Activated CD4-positive, alpha-beta T cell treated with anti-CD3 and anti-CD28 coated beads, Interleukin-2, amount 10 ng/mL, durations not matched to agents 24 days and 14 days (primary cell): ENCODE measurements at regions of chr6 and their contacts with region 1.

Region 1: GRCh38 chr6:108260809-108261569 is at the start of gene SNX3:
- DNase-seq: peak; percentile 97
- H3K4me3 Mint-ChIP-seq: peak within 1 kb of the TSS; percentile 86
- H3K27ac Mint-ChIP-seq: peak within 1 kb of the TSS; percentile 89
- H3K4me1 Mint-ChIP-seq: peaks cover 18% of the 10 kb centered on the region
- H3K27me3 Mint-ChIP-seq: peaks cover 9% of the 10 kb centered on the region
- total RNA-seq, gene SNX3: 75.1 and 78.0 TPM in 2 replicates

Region 2: DNA sequence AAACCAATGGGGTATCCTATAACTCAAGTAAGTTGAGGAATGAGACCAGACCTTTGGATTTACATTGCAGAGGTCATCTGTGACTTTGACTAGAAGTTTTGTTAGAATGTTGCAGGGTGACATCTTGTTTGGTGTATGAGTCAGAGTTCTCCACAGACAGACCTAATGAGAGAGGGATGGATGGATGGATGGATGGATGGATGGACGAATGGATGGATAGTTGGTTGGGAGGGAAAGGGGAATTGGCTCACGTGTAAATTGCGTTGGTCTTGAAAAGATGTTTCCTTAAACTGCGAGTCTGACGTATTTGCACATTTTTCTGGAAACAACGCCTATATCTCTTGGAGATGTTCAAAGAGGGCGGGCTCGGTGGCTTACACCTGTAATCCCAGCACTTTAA is 1234.0 kb before region 1 on chr6:
- intact Hi-C with region 1: loop called (anchors 5 kb)
- DNase-seq: no peak
- H3K4me3 Mint-ChIP-seq: no peak overlapping the region
- H3K27ac Mint-ChIP-seq: no peak overlapping the region
- H3K4me1 Mint-ChIP-seq: peaks cover 19% of the 10 kb centered on the region
- H3K27me3 Mint-ChIP-seq: no peaks in the 10 kb centered on the region

Region 3: DNA sequence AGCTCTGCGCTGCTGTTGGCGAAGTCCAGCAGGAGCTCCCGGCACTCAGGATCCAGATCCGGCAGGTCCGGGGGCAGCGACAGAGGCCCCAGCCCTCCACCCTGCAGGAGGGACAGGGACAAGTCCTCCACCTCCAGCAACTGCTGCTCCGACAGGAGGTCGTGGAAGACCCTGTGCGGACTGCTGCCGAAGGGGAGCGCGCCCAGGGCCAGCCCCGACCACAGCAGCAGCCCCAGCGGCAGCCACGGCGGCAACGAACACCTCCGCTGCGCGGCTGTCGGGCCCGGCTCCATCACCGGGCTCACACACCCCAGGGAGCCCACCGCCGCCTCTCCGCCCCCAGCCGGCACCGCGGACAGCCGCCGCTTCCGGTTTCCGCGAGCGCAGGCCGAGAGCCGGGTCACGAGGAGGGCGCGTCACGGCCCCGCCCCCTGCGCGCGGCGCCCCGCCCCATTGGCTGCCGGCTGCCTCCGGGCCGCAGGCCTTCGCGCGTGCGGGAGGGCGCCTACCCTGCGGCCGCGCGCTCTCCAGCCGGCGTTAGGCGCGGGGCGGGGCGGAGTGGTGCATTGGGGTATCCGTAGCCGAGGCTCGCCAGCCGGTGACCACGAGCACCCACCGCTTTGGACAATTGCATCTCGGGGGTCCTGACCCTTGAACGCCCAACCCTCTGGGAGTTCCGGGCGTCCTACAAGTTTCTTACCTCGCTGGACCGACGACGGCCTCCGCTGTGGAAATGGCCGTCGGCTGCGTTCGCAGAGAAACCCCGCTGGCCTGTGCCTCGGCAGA is 186.4 kb before region 1 on chr6 and contains the start of gene OSTM1:
- intact Hi-C with region 1: loop called (anchors 10 kb)
- DNase-seq: peak; percentile 99
- H3K4me3 Mint-ChIP-seq: peak within 1 kb of the TSS; percentile 81
- H3K27ac Mint-ChIP-seq: peak within 1 kb of the TSS; percentile 69
- H3K4me1 Mint-ChIP-seq: peaks cover 12% of the 10 kb centered on the region
- H3K27me3 Mint-ChIP-seq: peaks cover 21% of the 10 kb centered on the region
- total RNA-seq, gene OSTM1: 14.6 and 16.8 TPM in 2 replicates

Region 4: DNA sequence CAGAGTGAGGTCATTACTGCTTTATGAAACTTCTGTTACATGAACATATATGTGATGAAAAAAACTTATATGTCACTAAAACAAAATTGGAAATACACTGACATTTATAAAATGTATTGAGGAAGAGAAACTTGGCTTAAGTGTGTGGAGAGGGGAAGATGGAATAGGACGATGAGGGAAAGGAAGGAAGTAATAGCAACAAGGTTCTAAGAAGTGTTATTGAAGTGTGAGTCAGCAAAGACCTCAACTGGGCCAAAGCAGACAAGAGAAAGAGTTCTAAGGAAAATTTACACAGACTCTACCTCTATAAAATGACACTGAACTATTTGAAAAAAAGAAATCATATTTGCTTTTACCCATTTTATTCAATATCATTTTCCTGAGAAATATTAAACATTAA is 38.5 kb before region 1 on chr6:
- intact Hi-C with region 1: loop called (anchors 2 kb)
- DNase-seq: no peak
- H3K4me3 Mint-ChIP-seq: peak overlapping the region; percentile 6
- H3K27ac Mint-ChIP-seq: peak overlapping the region; percentile 68
- H3K4me1 Mint-ChIP-seq: peaks cover 11% of the 10 kb centered on the region
- H3K27me3 Mint-ChIP-seq: no peaks in the 10 kb centered on the region

Region 5: DNA sequence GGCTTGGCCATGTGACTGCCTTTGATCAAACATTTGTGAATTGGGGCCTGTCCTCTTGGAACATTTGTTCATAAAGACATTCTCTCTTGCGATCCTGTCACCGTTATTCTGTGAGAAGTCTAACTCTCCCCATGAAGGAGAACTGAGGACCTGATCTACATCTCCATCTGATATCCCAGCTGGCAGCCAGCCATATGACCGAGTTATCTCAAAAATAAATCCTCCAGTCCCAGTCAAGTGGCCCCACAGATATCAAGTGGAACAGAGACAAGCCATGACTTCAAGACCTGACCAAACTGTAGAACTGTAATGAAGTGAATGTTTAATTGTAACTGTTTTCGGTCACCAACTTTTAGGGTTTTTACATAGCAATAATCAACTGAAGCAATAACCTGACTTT is 25.9 kb before region 1 on chr6:
- intact Hi-C with region 1: no loop called
- DNase-seq: no peak
- H3K4me3 Mint-ChIP-seq: no peak overlapping the region
- H3K27ac Mint-ChIP-seq: no peak overlapping the region
- H3K4me1 Mint-ChIP-seq: no peaks in the 10 kb centered on the region
- H3K27me3 Mint-ChIP-seq: no peaks in the 10 kb centered on the region

Region 6: GRCh38 chr6:108294727-108295625 is 34.0 kb after region 1 on chr6 and contains the start of gene AFG1L:
- intact Hi-C with region 1: loop called (anchors 1 kb)
- DNase-seq: peak; percentile 96
- H3K4me3 Mint-ChIP-seq: peak within 1 kb of the TSS; percentile 99
- H3K27ac Mint-ChIP-seq: peak within 1 kb of the TSS; percentile 100
- H3K4me1 Mint-ChIP-seq: peaks cover 21% of the 10 kb centered on the region
- H3K27me3 Mint-ChIP-seq: peaks cover 1% of the 10 kb centered on the region
- total RNA-seq, gene AFG1L: 6.0 and 6.3 TPM in 2 replicates

Region 7: DNA sequence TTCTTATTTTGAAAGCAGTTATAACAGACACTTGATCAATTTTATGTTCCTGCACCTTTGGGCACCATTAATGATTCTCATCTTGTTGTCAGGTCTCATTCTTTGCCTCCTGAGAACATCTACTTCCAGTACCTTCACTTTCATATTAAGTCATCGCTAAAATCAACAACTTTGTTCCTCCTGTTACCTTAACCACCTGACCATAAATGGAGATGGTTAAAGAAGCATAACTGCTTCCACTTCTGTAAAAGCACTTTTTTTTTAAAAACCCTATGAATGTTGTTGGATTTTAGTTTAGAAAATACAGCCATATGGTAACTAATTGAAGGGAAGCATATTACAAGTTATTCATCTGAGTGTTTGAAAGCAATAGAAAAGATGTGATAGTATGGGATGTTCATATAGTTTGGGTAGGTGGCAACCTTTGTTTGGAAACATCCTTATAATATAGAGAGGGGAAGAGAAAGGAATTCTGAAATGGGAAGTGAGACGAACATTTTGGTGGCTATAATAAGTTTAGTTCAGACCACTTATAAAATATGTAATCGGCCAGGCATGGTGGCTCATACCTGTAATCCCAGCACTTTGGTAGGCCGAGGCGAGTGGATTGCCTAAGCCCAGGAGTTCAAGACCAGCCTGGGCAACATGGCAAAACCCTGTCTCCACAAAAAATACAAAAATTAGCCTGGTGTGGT is 87.8 kb after region 1 on chr6:
- intact Hi-C with region 1: loop called (anchors 2 kb)
- DNase-seq: peak; percentile 62
- H3K4me3 Mint-ChIP-seq: peak overlapping the region; percentile 69
- H3K27ac Mint-ChIP-seq: peak overlapping the region; percentile 84
- H3K4me1 Mint-ChIP-seq: peaks cover 15% of the 10 kb centered on the region
- H3K27me3 Mint-ChIP-seq: no peaks in the 10 kb centered on the region

Region 8: GRCh38 chr6:108771421-108771820 is 510.4 kb after region 1 on chr6:
- intact Hi-C with region 1: no loop called
- DNase-seq: peak; percentile 23
- H3K4me3 Mint-ChIP-seq: no peak overlapping the region
- H3K27ac Mint-ChIP-seq: no peak overlapping the region
- H3K4me1 Mint-ChIP-seq: no peaks in the 10 kb centered on the region
- H3K27me3 Mint-ChIP-seq: peaks cover 16% of the 10 kb centered on the region

Region 9: GRCh38 chr6:109095027-109095834 is 834.2 kb after region 1 on chr6 and contains the start of gene CEP57L1:
- intact Hi-C with region 1: loop called (anchors 1 kb)
- DNase-seq: peak; percentile 98
- H3K4me3 Mint-ChIP-seq: peak within 1 kb of the TSS; percentile 90
- H3K27ac Mint-ChIP-seq: peak within 1 kb of the TSS; percentile 100
- H3K4me1 Mint-ChIP-seq: peaks cover 53% of the 10 kb centered on the region
- H3K27me3 Mint-ChIP-seq: no peaks in the 10 kb centered on the region
- total RNA-seq, gene CEP57L1: 14.2 and 15.3 TPM in 2 replicates